ENCODE measurements at regions of chr9 and their contacts with region 1.

Region 1: DNA sequence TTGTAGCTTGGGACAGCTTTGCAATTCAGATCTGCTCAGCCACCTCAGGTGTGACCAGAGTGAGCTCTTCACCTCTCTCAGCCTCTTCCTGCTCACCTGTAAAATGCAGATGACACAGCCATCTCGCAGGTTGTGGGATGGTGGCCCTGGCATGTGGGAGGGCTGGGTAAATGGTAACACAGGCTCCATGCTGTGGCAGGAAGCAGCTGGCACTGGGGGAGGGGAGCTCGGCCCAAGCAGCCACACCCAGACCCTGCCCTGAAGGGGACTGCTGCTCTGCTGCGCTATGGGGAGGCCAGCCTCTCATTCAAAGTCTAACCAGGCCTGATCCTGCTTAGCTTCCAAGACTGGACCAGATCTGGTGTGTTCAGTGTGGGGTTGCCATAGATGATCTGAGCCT is 24.1 kb downstream of the PHF2 start:
- DNase-seq: peak in 1 of 2 experiments; percentile 58
- H3K4me3 ChIP-seq: no peak overlapping the region
- H3K27ac ChIP-seq: peak overlapping the region; percentile 50; the same call in 1 of the 2 replicates
- H3K4me1 ChIP-seq: peaks cover 9 to 29% (median 20%) of the 10 kb centered on the region in 4 experiments
- H3K27me3 ChIP-seq: no peaks in the 10 kb centered on the region; a peak in 1 of 7 replicates
- CTCF ChIP-seq: no peak
- EP300 ChIP-seq: no peak
- POLR2A ChIP-seq: no peak
- RAD21 ChIP-seq: no peak

Region 2: GRCh38 chr9:93617273-93617672 is 16.8 kb after region 1 on chr9:
- CTCF ChIA-PET with region 1: interaction called, 4 read pairs
- POLR2A ChIA-PET with region 1: interaction called, 15 read pairs
- DNase-seq: peak in 1 of 2 experiments; percentile 49
- H3K4me3 ChIP-seq: peak overlapping the region in 1 of 4 experiments; percentile 22; a peak in 1 of 8 replicates
- H3K27ac ChIP-seq: no peak overlapping the region
- H3K4me1 ChIP-seq: peaks cover 0 to 14% (median 1%) of the 10 kb centered on the region in 4 experiments; a peak in 4 of 7 replicates
- H3K27me3 ChIP-seq: no peaks in the 10 kb centered on the region
- CTCF ChIP-seq: no peak
- EP300 ChIP-seq: no peak
- POLR2A ChIP-seq: no peak
- RAD21 ChIP-seq: no peak

Measured in H1 (cell line).